ENCODE measurements at regions of chr18 and their contacts with region 1.

Region 1: DNA sequence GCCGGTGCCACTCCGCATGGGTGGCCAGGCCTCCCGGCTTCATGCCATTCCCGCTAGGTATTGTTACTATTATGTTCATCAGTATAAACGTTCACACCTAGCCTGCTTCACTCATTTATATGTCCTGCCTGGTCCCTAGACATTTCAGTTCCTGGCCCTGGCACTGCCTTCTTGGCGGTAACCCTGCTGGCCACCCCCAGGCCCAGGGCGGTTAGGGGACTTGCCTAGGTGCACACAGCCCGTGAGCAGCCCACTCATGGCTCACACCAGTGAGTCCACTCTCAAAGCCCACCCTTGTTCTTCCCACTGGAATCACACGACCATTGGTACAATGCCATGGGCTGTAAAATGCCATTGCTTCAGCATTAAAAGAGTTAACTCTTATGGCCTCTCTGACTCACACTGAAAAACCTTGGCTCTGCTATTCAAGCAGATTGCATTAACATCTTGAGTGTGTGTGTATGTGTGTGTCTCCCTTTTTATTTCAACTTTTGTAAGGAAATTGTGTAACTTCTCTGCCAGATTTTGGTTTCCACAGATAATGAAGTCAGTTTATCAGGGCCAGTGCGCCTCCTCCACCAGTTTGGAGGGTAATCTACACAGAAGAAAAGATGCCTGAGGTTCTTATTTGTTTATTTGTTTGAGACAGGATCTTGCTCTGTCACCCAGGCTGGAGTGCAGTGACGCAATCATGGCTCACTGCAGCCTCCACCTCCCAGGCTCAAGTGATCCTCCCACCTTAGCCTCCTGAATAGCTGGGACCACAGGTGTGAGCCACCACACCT is 74.2 kb downstream of the RAB31 start:
- H3K4me3 Mint-ChIP-seq: no peak overlapping the region
- H3K27ac Mint-ChIP-seq: peak overlapping the region; percentile 20
- H3K4me1 Mint-ChIP-seq: peaks cover 48% of the 10 kb centered on the region
- H3K27me3 Mint-ChIP-seq: no peaks in the 10 kb centered on the region

Region 2: GRCh38 chr18:9683407-9684396 is 98.6 kb before region 1 on chr18:
- intact Hi-C with region 1: no loop called
- H3K4me3 Mint-ChIP-seq: no peak overlapping the region
- H3K27ac Mint-ChIP-seq: peak overlapping the region; percentile 90
- H3K4me1 Mint-ChIP-seq: peaks cover 35% of the 10 kb centered on the region
- H3K27me3 Mint-ChIP-seq: no peaks in the 10 kb centered on the region

Region 3: DNA sequence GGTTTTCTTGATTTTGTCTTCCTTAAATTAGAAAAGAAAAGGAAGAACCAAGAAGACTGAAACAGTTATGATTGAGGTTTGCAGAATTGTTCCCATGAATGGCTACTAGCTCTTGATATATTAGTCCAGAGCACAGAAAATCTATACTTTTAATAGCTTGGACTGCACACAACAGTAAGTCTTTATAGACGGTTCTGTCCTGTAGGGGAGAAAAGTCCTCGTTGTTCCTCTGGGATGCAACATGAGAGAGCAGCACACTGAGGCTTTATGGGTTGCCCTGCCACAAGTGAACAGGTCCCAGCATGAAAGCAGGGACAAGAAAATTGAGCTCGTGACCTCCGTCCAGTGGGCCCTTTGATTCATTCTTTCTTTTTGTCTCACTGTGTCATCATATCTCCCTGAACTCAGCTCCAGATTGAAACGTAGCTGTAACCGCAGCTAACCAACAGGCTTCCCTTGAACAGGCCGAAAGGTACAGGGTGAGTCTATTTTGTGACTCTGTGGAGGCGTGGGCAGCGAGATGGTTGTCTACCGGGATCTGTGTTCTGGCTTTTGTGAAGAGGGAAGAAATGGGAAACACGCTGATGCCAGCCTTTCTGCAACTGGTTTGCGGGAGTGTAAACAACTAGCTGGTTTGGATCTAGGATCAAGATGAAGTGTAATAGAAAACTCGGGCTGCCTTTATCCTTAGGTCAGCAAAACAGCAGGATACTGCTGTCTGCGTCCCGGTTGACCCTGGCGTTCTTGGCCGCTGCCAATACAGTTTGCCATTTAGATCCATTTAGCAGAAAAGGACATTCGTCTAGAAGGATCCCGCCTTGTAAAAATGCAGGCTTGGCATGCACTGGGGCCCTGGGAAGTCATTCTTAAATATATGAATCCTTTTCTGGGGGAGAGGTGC is 32.4 kb before region 1 on chr18:
- intact Hi-C with region 1: loop called (anchors 5 kb)
- H3K4me3 Mint-ChIP-seq: no peak overlapping the region
- H3K27ac Mint-ChIP-seq: peak overlapping the region; percentile 73
- H3K4me1 Mint-ChIP-seq: peaks cover 68% of the 10 kb centered on the region
- H3K27me3 Mint-ChIP-seq: no peaks in the 10 kb centered on the region

Region 4: GRCh38 chr18:9827641-9828505 is 45.6 kb after region 1 on chr18:
- intact Hi-C with region 1: loop called (anchors 5 kb)
- H3K4me3 Mint-ChIP-seq: peak overlapping the region; percentile 59
- H3K27ac Mint-ChIP-seq: no peak overlapping the region
- H3K4me1 Mint-ChIP-seq: peaks cover 39% of the 10 kb centered on the region
- H3K27me3 Mint-ChIP-seq: no peaks in the 10 kb centered on the region

Region 5: DNA sequence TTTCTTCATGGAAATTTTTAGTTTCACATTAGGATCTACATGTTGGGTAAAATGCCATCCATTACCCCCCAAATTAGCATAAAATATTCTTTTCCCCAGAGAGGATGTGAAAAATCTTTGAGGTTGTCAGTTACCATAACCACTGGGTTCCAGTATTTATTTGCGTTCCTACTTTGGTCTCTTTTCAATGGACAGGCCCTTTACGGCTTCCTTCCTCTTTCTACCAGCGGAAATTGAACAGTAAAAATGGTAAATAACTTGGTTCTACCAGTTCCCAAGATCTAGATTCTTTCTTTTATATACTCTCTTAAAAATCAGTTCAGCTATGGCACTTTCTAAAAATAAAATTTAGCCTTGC is 503.0 kb after region 1 on chr18:
- intact Hi-C with region 1: no loop called
- H3K4me3 Mint-ChIP-seq: no peak overlapping the region
- H3K27ac Mint-ChIP-seq: peak overlapping the region; percentile 85
- H3K4me1 Mint-ChIP-seq: peaks cover 80% of the 10 kb centered on the region
- H3K27me3 Mint-ChIP-seq: no peaks in the 10 kb centered on the region